CD4-positive, alpha-beta T cell (primary cell): ENCODE measurements at regions of chr11 and their contacts with region 1.

Region 1: DNA sequence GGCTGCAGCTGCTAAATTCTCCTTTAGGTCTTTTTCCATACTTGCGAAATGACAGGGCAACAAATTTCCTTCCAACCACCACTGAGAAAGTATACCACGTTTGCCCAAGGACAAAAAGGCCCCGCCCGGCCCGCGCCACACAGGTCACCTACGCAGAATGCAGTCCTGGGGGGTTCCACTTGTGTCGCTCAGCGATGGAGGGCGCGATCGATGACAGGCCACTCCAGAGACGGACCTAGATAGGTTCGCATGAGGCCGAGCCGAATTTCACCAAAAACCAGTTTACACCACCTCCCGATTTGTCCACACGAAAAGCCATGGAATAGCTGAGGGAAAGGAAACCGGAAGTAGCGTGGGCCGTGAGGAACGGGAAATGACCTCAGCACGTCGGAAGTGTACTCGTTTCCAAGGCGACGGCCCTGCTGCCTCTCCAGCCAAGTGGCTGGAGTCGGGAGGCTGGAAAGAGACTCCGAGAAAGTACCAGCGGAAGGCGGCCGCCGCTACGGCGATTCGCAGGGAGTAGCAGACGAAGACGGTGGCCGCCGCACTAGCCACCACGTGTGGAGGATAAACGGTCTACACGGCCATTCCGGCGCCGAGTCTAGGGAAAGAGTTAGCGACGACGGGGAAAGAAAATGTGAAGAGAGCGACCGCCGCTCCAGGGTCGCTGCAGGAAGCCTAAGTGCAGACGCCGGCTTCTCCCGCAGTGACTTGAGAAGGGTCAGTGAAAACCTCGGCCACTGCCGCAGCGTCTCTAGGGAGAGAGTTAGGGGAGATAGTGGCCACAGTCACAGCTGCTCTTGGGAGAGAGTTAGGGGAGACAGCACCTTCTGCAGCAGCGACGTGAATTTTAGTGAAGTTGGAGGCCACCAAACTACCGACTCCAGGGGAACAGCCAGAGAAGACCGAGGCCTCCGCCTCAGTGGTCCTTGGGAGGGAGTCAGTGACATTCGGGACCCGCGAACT is at the start of gene ANKRD42:
- DNase-seq: peak; percentile 65 to 95 (median 76)
- ATAC-seq: peak; percentile 69
- H3K4me3 ChIP-seq: peak within 1 kb of the TSS; percentile 70
- H3K4me3 Mint-ChIP-seq: peak within 1 kb of the TSS; percentile 99
- H3K27ac ChIP-seq: peak within 1 kb of the TSS; percentile 88 to 97
- H3K27ac Mint-ChIP-seq: peak within 1 kb of the TSS; percentile 99
- H3K4me1 ChIP-seq: peaks cover 26% of the 10 kb centered on the region
- H3K4me1 Mint-ChIP-seq: peaks cover 60% of the 10 kb centered on the region
- H3K27me3 ChIP-seq: no peaks in the 10 kb centered on the region
- H3K27me3 Mint-ChIP-seq: no peaks in the 10 kb centered on the region
- CTCF ChIP-seq: no peak
- total RNA-seq, gene ANKRD42: 8.6 to 10.0 TPM

Region 2: GRCh38 chr11:82927254-82927880 is 266.2 kb before region 1 on chr11:
- CTCF ChIA-PET with region 1: no interaction called
- POLR2A ChIA-PET with region 1: no interaction called
- intact Hi-C with region 1: loop called in 1 of 2 experiments (anchors 5 kb)
- DNase-seq: peak in 8 of 14 experiments; percentile 7 to 82 (median 44)
- ATAC-seq: peak; percentile 98
- H3K4me3 ChIP-seq: no peak overlapping the region
- H3K4me3 Mint-ChIP-seq: peak overlapping the region; percentile 1
- H3K27ac ChIP-seq: no peak overlapping the region
- H3K27ac Mint-ChIP-seq: peak overlapping the region; percentile 64
- H3K4me1 ChIP-seq: peaks cover 2% of the 10 kb centered on the region
- H3K4me1 Mint-ChIP-seq: peaks cover 44% of the 10 kb centered on the region
- H3K27me3 ChIP-seq: no peaks in the 10 kb centered on the region
- H3K27me3 Mint-ChIP-seq: no peaks in the 10 kb centered on the region
- CTCF ChIP-seq: peak; percentile 97

Region 3: DNA sequence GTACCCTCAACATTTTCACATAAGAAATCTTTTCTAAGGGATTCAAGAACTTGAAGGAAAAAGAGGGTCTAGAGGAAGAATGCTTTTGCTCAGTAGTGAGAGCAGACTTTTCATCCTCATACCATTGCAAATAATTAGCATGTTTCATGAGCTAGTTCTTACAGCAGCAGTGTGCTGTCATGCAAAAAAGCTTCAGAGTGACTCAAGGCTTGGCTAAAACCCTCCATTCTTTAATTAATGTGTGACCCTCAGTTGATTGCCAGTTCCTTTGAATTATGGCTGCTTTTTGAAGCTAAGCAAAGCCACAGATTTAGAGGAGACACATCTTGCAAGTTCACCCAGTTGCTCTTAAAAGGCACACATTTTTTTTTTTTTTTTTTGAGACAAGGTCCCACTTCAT is 73.3 kb before region 1 on chr11:
- CTCF ChIA-PET with region 1: no interaction called
- POLR2A ChIA-PET with region 1: no interaction called
- intact Hi-C with region 1: no loop called
- DNase-seq: no peak
- ATAC-seq: no peak
- H3K4me3 ChIP-seq: no peak overlapping the region
- H3K4me3 Mint-ChIP-seq: no peak overlapping the region
- H3K27ac ChIP-seq: no peak overlapping the region
- H3K27ac Mint-ChIP-seq: peak overlapping the region; percentile 85
- H3K4me1 ChIP-seq: peaks cover 49% of the 10 kb centered on the region
- H3K4me1 Mint-ChIP-seq: peaks cover 65% of the 10 kb centered on the region
- H3K27me3 ChIP-seq: no peaks in the 10 kb centered on the region
- H3K27me3 Mint-ChIP-seq: no peaks in the 10 kb centered on the region
- CTCF ChIP-seq: no peak

Region 4: DNA sequence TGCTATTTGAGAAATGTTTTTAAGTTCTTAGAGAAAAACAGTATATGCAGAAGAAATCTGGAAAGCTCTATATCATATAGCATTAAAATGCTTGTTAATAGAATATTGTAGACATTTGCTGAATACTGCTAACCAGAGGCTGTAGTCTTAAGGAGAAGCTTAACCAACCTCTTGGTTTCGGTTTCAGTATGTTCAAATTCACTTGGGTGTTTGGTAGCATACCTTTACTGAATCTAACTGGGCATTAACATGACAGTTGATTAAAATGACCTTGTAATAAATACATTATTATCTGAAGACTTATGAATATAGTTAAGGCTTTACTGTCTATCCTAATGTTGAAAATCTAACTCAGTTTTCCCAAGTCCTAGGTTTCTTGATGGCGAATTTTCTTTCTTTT is 31.2 kb before region 1 on chr11:
- CTCF ChIA-PET with region 1: no interaction called
- POLR2A ChIA-PET with region 1: interaction called, 81 read pairs
- intact Hi-C with region 1: loop called (anchors 1 to 2 kb)
- DNase-seq: peak in 3 of 14 experiments; percentile 60 to 67 (median 64)
- ATAC-seq: peak; percentile 39
- H3K4me3 ChIP-seq: no peak overlapping the region
- H3K4me3 Mint-ChIP-seq: peak overlapping the region; percentile 75
- H3K27ac ChIP-seq: peak overlapping the region; percentile 2 to 45
- H3K27ac Mint-ChIP-seq: peak overlapping the region; percentile 100
- H3K4me1 ChIP-seq: peaks cover 19% of the 10 kb centered on the region
- H3K4me1 Mint-ChIP-seq: peaks cover 77% of the 10 kb centered on the region
- H3K27me3 ChIP-seq: no peaks in the 10 kb centered on the region
- H3K27me3 Mint-ChIP-seq: no peaks in the 10 kb centered on the region
- CTCF ChIP-seq: no peak

Region 5: GRCh38 chr11:83249972-83250593 is 56.5 kb after region 1 on chr11:
- CTCF ChIA-PET with region 1: no interaction called
- POLR2A ChIA-PET with region 1: interaction called, 6 read pairs
- intact Hi-C with region 1: loop called in 1 of 2 experiments (anchors 2 kb)
- DNase-seq: peak in 4 of 14 experiments; percentile 21 to 70 (median 62)
- ATAC-seq: peak; percentile 85
- H3K4me3 ChIP-seq: no peak overlapping the region
- H3K4me3 Mint-ChIP-seq: no peak overlapping the region
- H3K27ac ChIP-seq: no peak overlapping the region
- H3K27ac Mint-ChIP-seq: no peak overlapping the region
- H3K4me1 ChIP-seq: no peaks in the 10 kb centered on the region
- H3K4me1 Mint-ChIP-seq: no peaks in the 10 kb centered on the region
- H3K27me3 ChIP-seq: no peaks in the 10 kb centered on the region
- H3K27me3 Mint-ChIP-seq: no peaks in the 10 kb centered on the region
- CTCF ChIP-seq: peak; percentile 85

Region 6: DNA sequence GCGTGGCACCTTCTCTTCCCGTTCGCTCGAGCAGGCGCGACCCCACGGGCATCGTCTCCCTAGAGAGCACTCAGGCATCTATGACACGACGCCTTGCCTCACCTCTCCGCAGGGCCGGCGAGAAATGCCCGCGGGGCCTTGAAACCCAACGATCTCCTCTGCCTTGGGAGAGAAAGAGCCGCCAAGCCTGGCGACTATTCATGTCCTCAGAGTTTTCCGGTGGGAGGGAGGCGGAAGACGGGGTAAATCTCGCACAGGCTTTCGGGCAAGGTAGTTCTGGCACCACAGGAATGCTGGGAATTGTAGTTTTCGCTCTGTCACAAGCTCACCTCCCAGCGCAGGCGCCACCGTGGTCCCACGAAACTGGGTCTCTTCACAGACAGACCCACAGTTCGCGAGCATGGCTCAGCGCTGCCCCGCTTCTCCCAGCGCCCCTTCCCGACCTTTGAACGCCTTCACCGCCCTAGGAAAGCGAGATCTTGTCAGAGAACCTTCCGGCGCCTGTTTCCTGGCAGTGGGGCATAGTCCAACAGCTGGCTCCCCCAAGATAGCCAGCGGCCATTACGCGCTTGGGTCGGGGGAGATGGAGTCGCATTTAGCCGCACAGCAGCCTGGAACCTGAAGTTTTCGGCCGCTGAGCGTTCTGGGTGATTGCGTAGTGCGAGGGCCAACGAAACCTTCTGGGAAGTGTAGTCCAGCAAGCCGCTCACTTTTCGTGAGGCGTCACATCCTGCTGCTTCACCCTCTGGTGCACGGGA is 92.4 kb after region 1 on chr11 and contains the start of gene CCDC90B:
- CTCF ChIA-PET with region 1: no interaction called
- POLR2A ChIA-PET with region 1: interaction called, 7 read pairs
- intact Hi-C with region 1: loop called in 1 of 2 experiments (anchors 1 kb)
- DNase-seq: peak; percentile 88 to 98 (median 90)
- ATAC-seq: peak; percentile 90
- H3K4me3 ChIP-seq: peak within 1 kb of the TSS; percentile 92
- H3K4me3 Mint-ChIP-seq: peak within 1 kb of the TSS; percentile 97
- H3K27ac ChIP-seq: peak within 1 kb of the TSS; percentile 95 to 99
- H3K27ac Mint-ChIP-seq: peak within 1 kb of the TSS; percentile 100
- H3K4me1 ChIP-seq: peaks cover 13% of the 10 kb centered on the region
- H3K4me1 Mint-ChIP-seq: peaks cover 52% of the 10 kb centered on the region
- H3K27me3 ChIP-seq: no peaks in the 10 kb centered on the region
- H3K27me3 Mint-ChIP-seq: no peaks in the 10 kb centered on the region
- CTCF ChIP-seq: no peak
- total RNA-seq, gene CCDC90B: 23.5 to 25.7 TPM

Region 7: GRCh38 chr11:83671289-83671688 is 477.7 kb after region 1 on chr11:
- CTCF ChIA-PET with region 1: no interaction called
- POLR2A ChIA-PET with region 1: no interaction called
- intact Hi-C with region 1: no loop called
- DNase-seq: no peak
- ATAC-seq: no peak
- H3K4me3 ChIP-seq: no peak overlapping the region
- H3K4me3 Mint-ChIP-seq: no peak overlapping the region
- H3K27ac ChIP-seq: no peak overlapping the region
- H3K27ac Mint-ChIP-seq: no peak overlapping the region
- H3K4me1 ChIP-seq: no peaks in the 10 kb centered on the region
- H3K4me1 Mint-ChIP-seq: no peaks in the 10 kb centered on the region
- H3K27me3 ChIP-seq: no peaks in the 10 kb centered on the region
- H3K27me3 Mint-ChIP-seq: no peaks in the 10 kb centered on the region
- CTCF ChIP-seq: no peak

Region 8: DNA sequence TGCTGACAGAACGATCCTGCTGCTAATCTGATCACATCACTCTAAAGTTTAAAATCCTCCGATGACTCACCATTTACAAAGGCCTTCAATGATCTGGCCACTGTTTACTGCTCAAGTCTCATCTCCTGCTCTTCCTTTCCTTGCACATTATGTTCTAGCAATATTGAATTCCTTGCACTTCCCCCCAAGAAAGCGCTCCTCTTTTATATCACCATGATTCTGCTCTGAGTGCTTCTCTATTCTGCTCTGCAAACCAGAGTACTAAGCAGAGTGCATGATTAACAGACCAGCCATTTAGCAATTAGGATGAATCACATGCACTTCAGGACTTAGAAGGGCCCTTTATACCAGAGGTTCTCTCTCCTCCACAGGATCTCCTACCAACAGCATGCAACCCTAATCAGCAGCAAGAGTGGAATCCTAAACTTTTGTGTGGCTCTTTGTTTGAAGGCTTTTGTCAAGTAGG is 1215.4 kb after region 1 on chr11:
- CTCF ChIA-PET with region 1: no interaction called
- POLR2A ChIA-PET with region 1: no interaction called
- intact Hi-C with region 1: no loop called
- DNase-seq: no peak
- ATAC-seq: no peak
- H3K4me3 ChIP-seq: no peak overlapping the region
- H3K4me3 Mint-ChIP-seq: no peak overlapping the region
- H3K27ac ChIP-seq: no peak overlapping the region
- H3K27ac Mint-ChIP-seq: no peak overlapping the region
- H3K4me1 ChIP-seq: no peaks in the 10 kb centered on the region
- H3K4me1 Mint-ChIP-seq: no peaks in the 10 kb centered on the region
- H3K27me3 ChIP-seq: no peaks in the 10 kb centered on the region
- H3K27me3 Mint-ChIP-seq: no peaks in the 10 kb centered on the region
- CTCF ChIP-seq: no peak